Ascending aorta (tissue), 2 donors: ENCODE measurements at regions of chr6 and their contacts with region 1.

Region 1: DNA sequence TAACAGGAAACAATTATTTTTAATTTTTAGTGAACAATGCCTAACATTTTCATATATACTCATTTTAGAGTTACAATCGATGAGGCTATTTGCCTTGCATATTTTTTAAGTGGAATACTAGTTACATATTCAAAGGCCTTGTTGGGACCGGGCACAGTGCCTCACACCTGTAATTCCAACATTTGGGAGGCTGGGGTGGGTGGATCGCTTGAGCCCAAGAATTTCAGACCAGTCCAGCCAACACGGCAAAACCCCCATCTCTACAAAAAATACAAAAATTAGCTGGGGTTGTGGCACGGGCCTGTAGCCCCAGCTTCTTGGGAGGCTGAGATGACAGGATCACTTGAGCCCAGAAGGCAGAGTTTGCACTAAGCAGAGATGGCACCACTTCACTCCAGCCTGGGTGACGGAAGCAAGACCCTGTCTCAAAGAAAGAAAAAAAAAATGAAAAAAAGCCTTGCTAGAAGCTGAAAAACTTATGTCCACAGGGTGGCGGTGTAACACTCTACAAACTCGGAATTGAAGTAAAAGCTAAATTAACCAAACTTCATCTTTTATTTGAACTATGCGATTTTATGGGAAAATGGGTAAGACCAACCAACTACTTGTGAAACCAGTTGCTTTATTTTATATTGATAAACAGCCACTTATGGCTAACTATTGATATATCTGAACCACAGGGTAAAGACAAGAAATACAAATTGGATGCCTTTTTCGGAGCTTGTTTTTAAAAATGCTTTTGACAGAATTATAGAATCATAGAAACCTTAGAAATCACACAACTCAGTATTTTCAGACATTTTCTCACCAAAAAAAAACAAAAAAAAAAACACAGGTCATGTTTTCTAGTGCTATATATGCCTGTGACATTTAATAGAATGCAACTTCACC is 24.1 kb upstream of the ROS1 start:
- DNase-seq: peak in 1 of 2 donors; percentile 76
- H3K4me3 ChIP-seq: peak overlapping the region in 1 of 2 donors; percentile 3
- H3K27ac ChIP-seq: peak overlapping the region; percentile 56 to 63
- H3K4me1 ChIP-seq: peaks cover 0 to 13% of the 10 kb centered on the region in 2 donors
- H3K27me3 ChIP-seq: no peaks in the 10 kb centered on the region
- CTCF ChIP-seq: peak; percentile 53 to 81 (median 76)

Region 2: GRCh38 chr6:117346142-117346930 is 103.5 kb before region 1 on chr6:
- intact Hi-C with region 1: loop called (anchors 2 kb)
- DNase-seq: no peak
- H3K4me3 ChIP-seq: peak overlapping the region in 1 of 2 donors; percentile 47
- H3K27ac ChIP-seq: no peak overlapping the region
- H3K4me1 ChIP-seq: no peaks in the 10 kb centered on the region
- H3K27me3 ChIP-seq: no peaks in the 10 kb centered on the region
- CTCF ChIP-seq: peak in 2 of 3 experiments; percentile 49 to 55

Region 3: GRCh38 chr6:117555882-117556498 is 106.2 kb after region 1 on chr6:
- intact Hi-C with region 1: loop called (anchors 1 kb)
- DNase-seq: no peak
- H3K4me3 ChIP-seq: no peak overlapping the region
- H3K27ac ChIP-seq: no peak overlapping the region
- H3K4me1 ChIP-seq: no peaks in the 10 kb centered on the region
- H3K27me3 ChIP-seq: no peaks in the 10 kb centered on the region
- CTCF ChIP-seq: peak; percentile 71 to 85 (median 78)

Region 4: DNA sequence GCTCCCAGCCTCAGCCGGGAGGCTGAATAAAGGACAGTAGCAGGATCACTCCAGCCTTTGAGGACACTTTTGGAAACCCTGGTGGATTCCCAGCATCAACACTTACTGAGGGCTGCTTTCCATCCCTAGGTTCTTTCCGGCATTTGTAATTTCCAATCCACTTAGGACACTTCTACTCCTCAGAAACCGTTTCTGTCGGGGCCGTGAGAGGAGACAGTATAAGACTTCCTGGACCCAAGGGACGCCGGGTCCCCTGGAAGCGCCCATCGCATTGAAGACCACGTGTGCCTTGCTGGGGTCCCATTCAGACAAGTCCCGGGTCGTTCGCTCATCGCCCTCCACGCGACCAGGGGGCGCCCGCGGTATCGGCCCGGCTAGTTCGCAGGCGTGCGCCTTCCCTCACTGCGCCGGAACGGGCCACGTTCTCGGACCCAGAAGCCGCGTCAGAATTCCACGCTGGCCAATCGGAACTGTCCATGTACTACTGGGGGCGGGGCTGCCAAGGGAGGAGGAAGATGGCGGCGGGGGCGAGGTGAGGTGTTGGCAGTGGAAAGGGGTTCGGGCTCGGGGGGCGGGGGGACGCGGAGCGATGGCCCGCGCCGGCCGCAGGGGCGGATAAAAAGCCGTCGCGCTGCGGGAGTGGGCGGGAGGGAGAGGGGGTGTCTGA is 225.3 kb after region 1 on chr6 and contains the start of gene NUS1:
- intact Hi-C with region 1: loop called (anchors 5 kb)
- DNase-seq: peak; percentile 89 to 99
- H3K4me3 ChIP-seq: peak within 1 kb of the TSS; percentile 81 to 92
- H3K27ac ChIP-seq: peak within 1 kb of the TSS; percentile 79 to 82
- H3K4me1 ChIP-seq: peaks cover 0 to 9% of the 10 kb centered on the region in 2 donors
- H3K27me3 ChIP-seq: no peaks in the 10 kb centered on the region
- CTCF ChIP-seq: peak; percentile 59 to 89 (median 84)
- total RNA-seq, gene NUS1: 14.6 TPM